ENCODE measurements at regions of chr7 and their contacts with region 1.

Region 1: GRCh38 chr7:116525913-116526861 is 1.4 kb downstream of the CAV1 start:
- DNase-seq: peak; percentile 81 to 84
- ATAC-seq: peak; percentile 91 to 92 (median 92)
- H3K4me3 ChIP-seq: peak overlapping the region; percentile 80
- H3K27ac ChIP-seq: peak overlapping the region; percentile 77
- H3K4me1 ChIP-seq: no peaks in the 10 kb centered on the region
- H3K27me3 ChIP-seq: no peaks in the 10 kb centered on the region
- CTCF ChIP-seq: peak; percentile 89

Region 2: GRCh38 chr7:115249080-115249479 is 1277.1 kb before region 1 on chr7:
- intact Hi-C with region 1: no loop called
- DNase-seq: no peak
- ATAC-seq: no peak
- H3K4me3 ChIP-seq: no peak overlapping the region
- H3K27ac ChIP-seq: no peak overlapping the region
- H3K4me1 ChIP-seq: no peaks in the 10 kb centered on the region
- H3K27me3 ChIP-seq: no peaks in the 10 kb centered on the region
- CTCF ChIP-seq: no peak

Region 3: GRCh38 chr7:115620036-115620435 is 906.2 kb before region 1 on chr7:
- intact Hi-C with region 1: no loop called
- DNase-seq: no peak
- ATAC-seq: no peak
- H3K4me3 ChIP-seq: no peak overlapping the region
- H3K27ac ChIP-seq: no peak overlapping the region
- H3K4me1 ChIP-seq: no peaks in the 10 kb centered on the region
- H3K27me3 ChIP-seq: no peaks in the 10 kb centered on the region
- CTCF ChIP-seq: no peak

Region 4: GRCh38 chr7:116258734-116259133 is 267.5 kb before region 1 on chr7:
- intact Hi-C with region 1: loop called (anchors 2 to 5 kb)
- DNase-seq: no peak
- ATAC-seq: peak; percentile 57 to 89 (median 70)
- H3K4me3 ChIP-seq: no peak overlapping the region
- H3K27ac ChIP-seq: no peak overlapping the region
- H3K4me1 ChIP-seq: peaks cover 6% of the 10 kb centered on the region
- H3K27me3 ChIP-seq: no peaks in the 10 kb centered on the region
- CTCF ChIP-seq: peak; percentile 91

Region 5: GRCh38 chr7:116395125-116395791 is 130.9 kb before region 1 on chr7:
- intact Hi-C with region 1: loop called in 1 of 2 experiments (anchors 10 kb)
- DNase-seq: no peak
- ATAC-seq: no peak
- H3K4me3 ChIP-seq: no peak overlapping the region
- H3K27ac ChIP-seq: peak overlapping the region; percentile 0
- H3K4me1 ChIP-seq: peaks cover 9% of the 10 kb centered on the region
- H3K27me3 ChIP-seq: no peaks in the 10 kb centered on the region
- CTCF ChIP-seq: no peak

Region 6: DNA sequence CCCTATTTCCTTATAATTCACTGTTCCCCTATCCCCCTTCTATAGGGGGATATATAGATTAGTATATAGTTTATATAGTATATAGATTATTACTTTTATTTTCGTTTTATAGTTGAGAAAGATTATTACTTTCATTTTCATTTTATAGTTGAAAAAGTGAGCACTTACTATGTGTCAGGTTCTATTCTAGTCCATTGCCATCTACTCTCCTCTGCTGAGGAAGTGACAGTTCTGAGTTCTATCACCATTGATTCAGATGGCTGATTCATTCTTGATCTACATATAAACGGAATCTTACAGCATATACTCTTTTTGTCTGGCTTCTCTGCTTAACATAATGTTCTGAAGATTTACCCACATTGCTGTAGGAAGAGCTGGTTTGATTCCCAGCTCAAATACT is 47.4 kb before region 1 on chr7:
- intact Hi-C with region 1: no loop called
- DNase-seq: no peak
- ATAC-seq: no peak
- H3K4me3 ChIP-seq: no peak overlapping the region
- H3K27ac ChIP-seq: no peak overlapping the region
- H3K4me1 ChIP-seq: no peaks in the 10 kb centered on the region
- H3K27me3 ChIP-seq: no peaks in the 10 kb centered on the region
- CTCF ChIP-seq: no peak

Region 7: DNA sequence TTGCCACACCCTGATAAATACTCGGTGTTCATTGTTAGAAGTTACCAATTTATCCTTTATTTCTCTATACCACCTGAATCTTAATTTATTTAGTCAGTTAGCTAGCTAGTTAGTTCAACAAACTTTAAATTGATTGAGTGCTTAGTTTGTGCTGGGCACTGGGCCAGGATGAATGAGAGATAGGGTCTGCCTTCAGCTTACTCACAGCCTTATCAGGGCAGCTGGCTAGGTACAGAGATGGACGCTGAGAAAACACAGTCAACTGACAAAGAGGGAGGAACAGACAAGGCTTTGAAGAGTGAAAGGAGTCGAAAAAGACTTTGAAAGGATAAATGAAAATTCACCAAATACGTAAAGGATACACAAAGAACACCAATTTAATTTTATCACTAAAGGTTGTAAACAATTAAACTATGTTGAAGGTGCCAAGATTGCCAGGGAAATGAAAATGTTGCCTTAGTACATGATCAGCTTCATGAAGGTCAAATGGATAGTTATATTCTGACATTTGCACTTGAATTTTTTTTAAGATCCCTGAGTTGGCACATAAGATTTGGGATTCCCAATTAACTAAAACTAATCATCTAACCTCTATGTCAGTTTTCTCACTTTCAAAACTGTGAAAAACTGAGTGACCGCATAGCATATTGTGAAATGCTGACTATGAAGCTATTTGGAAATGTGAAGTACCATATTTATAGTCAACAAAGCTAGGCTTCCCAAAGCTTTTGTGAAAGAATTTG is 24.6 kb before region 1 on chr7:
- intact Hi-C with region 1: loop called in 1 of 2 experiments (anchors 1 kb)
- DNase-seq: no peak
- ATAC-seq: no peak
- H3K4me3 ChIP-seq: peak overlapping the region; percentile 78
- H3K27ac ChIP-seq: peak overlapping the region; percentile 81
- H3K4me1 ChIP-seq: no peaks in the 10 kb centered on the region
- H3K27me3 ChIP-seq: peaks cover 0 to 19% (median 0%) of the 10 kb centered on the region in 3 donors
- CTCF ChIP-seq: no peak